ENCODE measurements at regions of chr18 and their contacts with region 1.

Region 1: GRCh38 chr18:33761363-33761762 is 183.3 kb downstream of the ASXL3 start:
- DNase-seq: peak; percentile 28
- ATAC-seq: peak; percentile 75
- H3K4me3 ChIP-seq: no peak overlapping the region
- H3K27ac ChIP-seq: no peak overlapping the region
- H3K4me1 ChIP-seq: peaks cover 2% of the 10 kb centered on the region; the same call in 1 of the 2 replicates
- H3K27me3 ChIP-seq: peaks cover 3% of the 10 kb centered on the region; the same call in 1 of the 2 replicates
- CTCF ChIP-seq: peak; percentile 49
- POLR2A ChIP-seq: no peak
- RAD21 ChIP-seq: peak; percentile 44

Region 2: GRCh38 chr18:33231474-33232317 is 529.7 kb before region 1 on chr18:
- CTCF ChIA-PET with region 1: interaction called, 5 read pairs
- POLR2A ChIA-PET with region 1: no interaction called
- dilution Hi-C with region 1: no loop called
- in situ Hi-C with region 1: loop called (anchors 10 kb)
- intact Hi-C with region 1: loop called (anchors 1 kb)
- DNase-seq: peak; percentile 60
- ATAC-seq: peak; percentile 94
- H3K4me3 ChIP-seq: no peak overlapping the region
- H3K27ac ChIP-seq: no peak overlapping the region
- H3K4me1 ChIP-seq: no peaks in the 10 kb centered on the region
- H3K27me3 ChIP-seq: no peaks in the 10 kb centered on the region
- CTCF ChIP-seq: peak; percentile 77
- POLR2A ChIP-seq: no peak
- RAD21 ChIP-seq: peak; percentile 63

Region 3: DNA sequence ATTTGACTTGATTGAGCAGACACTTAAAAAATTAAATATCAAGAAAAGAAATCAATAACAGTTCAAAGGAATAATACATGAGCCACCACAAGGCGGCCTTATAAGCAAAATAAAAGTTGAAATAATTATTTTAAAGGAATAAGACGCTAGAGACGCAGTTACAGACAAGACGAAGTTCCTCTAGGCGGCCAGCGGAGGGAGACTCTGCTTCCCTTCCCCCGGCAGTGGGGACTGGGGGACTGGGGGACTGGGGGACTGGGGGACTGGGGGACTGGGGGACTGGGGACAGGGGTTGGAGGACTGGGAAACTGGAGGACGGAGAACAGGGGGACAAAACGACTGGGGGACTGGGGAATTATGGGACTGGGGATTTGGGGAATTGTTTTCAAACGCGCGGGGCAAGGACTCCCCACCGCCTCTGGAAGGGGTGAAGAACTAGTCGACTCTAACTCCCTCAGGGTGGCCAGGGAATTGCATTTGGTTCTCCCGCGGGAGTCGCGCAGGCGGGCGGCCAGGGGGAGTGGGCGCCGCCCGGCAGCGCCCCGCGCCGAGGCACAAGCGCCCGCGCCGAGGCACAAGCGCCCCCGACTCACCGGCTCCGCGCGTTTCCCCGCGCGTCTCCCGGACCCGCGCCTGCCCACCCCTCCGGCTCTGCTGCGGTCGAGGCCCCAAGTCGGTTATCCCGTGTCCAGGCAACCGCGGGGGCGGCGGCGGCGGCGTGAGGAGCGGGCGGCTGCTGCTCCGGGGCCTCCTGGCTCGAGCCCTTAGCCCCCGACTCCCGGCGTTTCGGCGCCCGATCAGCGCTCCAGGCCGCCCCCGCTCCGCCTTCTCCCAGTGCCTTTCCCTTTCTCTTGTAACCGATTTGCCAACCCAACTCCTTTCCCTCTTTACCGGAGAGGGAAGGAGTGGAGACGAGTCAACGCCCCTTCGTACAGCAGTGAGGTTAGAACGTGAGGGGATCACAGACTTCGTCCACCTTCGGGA is 321.0 kb before region 1 on chr18 and contains the start of gene CCDC178:
- CTCF ChIA-PET with region 1: no interaction called
- POLR2A ChIA-PET with region 1: no interaction called
- dilution Hi-C with region 1: no loop called
- in situ Hi-C with region 1: no loop called
- intact Hi-C with region 1: loop called (anchors 1 kb)
- DNase-seq: peak; percentile 60
- ATAC-seq: peak; percentile 93
- H3K4me3 ChIP-seq: peak within 1 kb of the TSS; percentile 29; the same call in 1 of the 2 replicates
- H3K27ac ChIP-seq: no peak within 1 kb of the TSS; the same call in 1 of the 2 replicates
- H3K4me1 ChIP-seq: no peaks in the 10 kb centered on the region
- H3K27me3 ChIP-seq: peaks cover 3% of the 10 kb centered on the region; the same call in 1 of the 2 replicates
- CTCF ChIP-seq: peak; percentile 51
- POLR2A ChIP-seq: no peak
- RAD21 ChIP-seq: 0 out of 2 replicates have a peak, but pooled peaks have one; percentile 17
- total RNA-seq, gene CCDC178: not detected in 2 replicates

Region 4: DNA sequence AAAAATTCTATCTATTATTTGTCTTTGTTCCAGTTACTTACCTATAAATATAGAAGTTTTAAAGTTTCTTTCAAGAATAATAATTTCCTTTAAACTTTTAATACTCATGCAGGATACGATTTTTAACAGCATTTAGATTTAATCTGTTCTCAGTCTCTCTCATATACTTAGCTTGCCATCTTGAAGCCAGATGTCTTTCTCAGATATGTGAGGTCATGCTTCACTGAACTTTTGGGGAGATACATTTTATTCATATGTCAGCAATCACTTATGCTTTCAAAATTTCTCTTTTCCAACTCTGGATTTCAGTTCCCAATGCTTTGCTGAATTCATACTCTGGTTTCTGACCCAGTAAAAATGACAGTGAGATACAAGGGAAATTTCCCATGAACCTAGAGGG is 254.3 kb before region 1 on chr18:
- CTCF ChIA-PET with region 1: no interaction called
- POLR2A ChIA-PET with region 1: no interaction called
- dilution Hi-C with region 1: no loop called
- in situ Hi-C with region 1: no loop called
- intact Hi-C with region 1: loop called (anchors 10 kb)
- DNase-seq: no peak
- ATAC-seq: no peak
- H3K4me3 ChIP-seq: no peak overlapping the region
- H3K27ac ChIP-seq: no peak overlapping the region
- H3K4me1 ChIP-seq: no peaks in the 10 kb centered on the region
- H3K27me3 ChIP-seq: no peaks in the 10 kb centered on the region
- CTCF ChIP-seq: no peak
- POLR2A ChIP-seq: no peak
- RAD21 ChIP-seq: no peak

Region 5: GRCh38 chr18:33839441-33840211 is 78.3 kb after region 1 on chr18:
- CTCF ChIA-PET with region 1: interaction called, 10 read pairs
- POLR2A ChIA-PET with region 1: no interaction called
- dilution Hi-C with region 1: no loop called
- in situ Hi-C with region 1: no loop called
- intact Hi-C with region 1: no loop called
- DNase-seq: peak; percentile 48
- ATAC-seq: peak; percentile 67
- H3K4me3 ChIP-seq: no peak overlapping the region
- H3K27ac ChIP-seq: no peak overlapping the region
- H3K4me1 ChIP-seq: no peaks in the 10 kb centered on the region
- H3K27me3 ChIP-seq: no peaks in the 10 kb centered on the region
- CTCF ChIP-seq: peak; percentile 58
- POLR2A ChIP-seq: no peak
- RAD21 ChIP-seq: peak; percentile 43

Measured in IMR-90 (cell line).